ENCODE measurements at regions of chr12 and their contacts with region 1.

Region 1: DNA sequence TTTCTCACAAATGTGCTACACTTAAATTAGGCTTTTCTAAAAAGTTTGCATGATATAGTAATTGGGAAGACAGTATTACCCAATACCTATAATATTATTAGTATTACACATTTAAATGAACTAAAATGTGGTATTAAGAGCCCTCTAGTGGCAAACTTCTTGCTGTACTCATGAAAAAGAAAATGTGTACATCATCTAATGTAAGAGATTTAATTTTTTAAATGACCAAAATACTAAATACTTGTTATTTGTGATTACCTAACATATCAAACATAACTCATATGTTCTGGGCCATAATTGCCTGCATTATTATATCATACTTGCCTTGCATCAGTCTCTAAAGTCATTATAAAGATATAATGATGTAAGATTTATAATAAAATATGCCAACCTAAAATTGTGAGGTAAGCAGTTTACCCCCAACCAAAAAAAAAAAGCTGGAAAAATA is 64.2 kb downstream of the DNAI7 start:
- DNase-seq: peak; percentile 49
- H3K4me3 ChIP-seq: no peak overlapping the region
- H3K27ac ChIP-seq: no peak overlapping the region
- H3K4me1 ChIP-seq: no peaks in the 10 kb centered on the region
- H3K27me3 ChIP-seq: peaks cover 0 to 2% of the 10 kb centered on the region in 2 experiments
- CTCF ChIP-seq: peak; percentile 19 to 34
- POLR2A ChIP-seq: no peak

Region 2: GRCh38 chr12:24960222-24960855 is 170.4 kb before region 1 on chr12:
- CTCF ChIA-PET with region 1: interaction called, 4 read pairs
- POLR2A ChIA-PET with region 1: no interaction called
- dilution Hi-C with region 1: no loop called
- intact Hi-C with region 1: loop called (anchors 1 kb)
- DNase-seq: peak; percentile 66
- H3K4me3 ChIP-seq: no peak overlapping the region
- H3K27ac ChIP-seq: no peak overlapping the region
- H3K4me1 ChIP-seq: no peaks in the 10 kb centered on the region
- H3K27me3 ChIP-seq: peaks cover 0 to 2% of the 10 kb centered on the region in 2 experiments
- CTCF ChIP-seq: peak; percentile 73 to 79
- POLR2A ChIP-seq: no peak

Region 3: GRCh38 chr12:24972078-24972477 is 158.7 kb before region 1 on chr12:
- CTCF ChIA-PET with region 1: no interaction called
- POLR2A ChIA-PET with region 1: no interaction called
- dilution Hi-C with region 1: no loop called
- intact Hi-C with region 1: no loop called
- DNase-seq: no peak
- H3K4me3 ChIP-seq: no peak overlapping the region
- H3K27ac ChIP-seq: no peak overlapping the region
- H3K4me1 ChIP-seq: no peaks in the 10 kb centered on the region
- H3K27me3 ChIP-seq: no peaks in the 10 kb centered on the region
- CTCF ChIP-seq: no peak
- POLR2A ChIP-seq: no peak

Region 4: GRCh38 chr12:24997970-24998582 is 132.7 kb before region 1 on chr12:
- CTCF ChIA-PET with region 1: interaction called, 64 read pairs
- POLR2A ChIA-PET with region 1: no interaction called
- dilution Hi-C with region 1: no loop called
- intact Hi-C with region 1: no loop called
- DNase-seq: peak; percentile 80
- H3K4me3 ChIP-seq: no peak overlapping the region
- H3K27ac ChIP-seq: no peak overlapping the region
- H3K4me1 ChIP-seq: peaks cover 5% of the 10 kb centered on the region
- H3K27me3 ChIP-seq: peaks cover 0 to 2% of the 10 kb centered on the region in 2 experiments
- CTCF ChIP-seq: no peak
- POLR2A ChIP-seq: no peak